ENCODE measurements at regions of chrX and their contacts with region 1.

Region 1: GRCh38 chrX:152958524-152959465 is 35.1 kb downstream of the PNMA5 start:
- DNase-seq: peak; percentile 85
- CTCF ChIP-seq: peak; percentile 82

Region 2: DNA sequence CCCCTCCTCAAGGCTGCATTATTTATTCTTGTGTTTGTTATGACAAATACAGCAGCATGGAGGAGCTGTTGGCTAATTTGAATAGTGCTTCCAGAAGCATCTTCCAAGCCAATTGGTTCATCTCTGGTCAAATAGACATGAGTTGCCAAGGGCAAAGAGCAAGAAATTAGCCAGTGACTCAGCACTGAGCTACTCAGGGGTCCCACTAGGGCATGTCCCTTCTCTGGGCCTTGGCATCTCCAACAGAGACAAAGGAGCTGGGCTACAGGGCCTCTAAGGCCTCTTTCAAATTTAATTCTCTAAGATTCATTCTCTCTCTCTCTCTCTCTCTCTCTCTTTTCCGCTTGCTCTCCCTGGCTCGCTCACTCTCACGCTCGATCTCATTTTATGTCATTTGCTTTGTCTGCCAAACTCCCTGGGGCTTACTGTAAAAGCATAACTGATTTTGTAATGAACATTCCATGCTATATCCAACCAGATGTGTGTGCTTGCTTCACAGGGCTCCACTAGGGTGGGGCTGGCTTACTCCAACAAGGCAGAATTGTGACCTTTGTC is 1132.8 kb before region 1 on chrX:
- in situ Hi-C with region 1: no loop called
- DNase-seq: no peak
- CTCF ChIP-seq: no peak

Region 3: DNA sequence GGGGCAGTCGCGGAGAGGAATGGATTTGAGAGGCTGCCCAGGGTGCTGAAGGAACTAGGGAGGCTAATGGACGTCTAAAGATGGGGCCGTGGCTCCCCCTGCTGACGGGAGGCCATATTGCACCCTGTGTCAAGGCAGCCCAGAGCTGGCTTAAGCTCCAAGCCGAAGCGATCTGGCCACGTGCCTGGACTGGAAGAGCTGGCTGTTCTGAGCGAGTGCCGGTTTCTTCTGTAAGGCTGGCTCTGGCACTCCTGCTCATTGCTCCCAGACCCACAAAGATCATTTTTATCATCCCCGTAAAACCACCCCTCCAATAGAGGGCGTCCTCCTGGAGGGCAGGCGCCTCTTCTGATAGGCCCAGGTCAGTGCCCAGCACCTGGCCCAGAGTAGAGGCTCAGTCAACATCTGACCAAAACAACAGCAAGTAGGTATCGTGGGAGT is 709.2 kb after region 1 on chrX:
- in situ Hi-C with region 1: loop called (anchors 25 kb)
- DNase-seq: peak; percentile 82
- CTCF ChIP-seq: peak; percentile 75